HEK293 (cell line): ENCODE measurements at regions of chr20 and their contacts with region 1.

Region 1: GRCh38 chr20:38434743-38435554 is at the start of gene SNHG17:
- H3K4me3 ChIP-seq: peak within 1 kb of the TSS; percentile 71
- H3K27ac ChIP-seq: peak within 1 kb of the TSS; percentile 95
- H3K4me1 ChIP-seq: no peaks in the 10 kb centered on the region
- CTCF ChIP-seq: peak; percentile 100

Region 2: DNA sequence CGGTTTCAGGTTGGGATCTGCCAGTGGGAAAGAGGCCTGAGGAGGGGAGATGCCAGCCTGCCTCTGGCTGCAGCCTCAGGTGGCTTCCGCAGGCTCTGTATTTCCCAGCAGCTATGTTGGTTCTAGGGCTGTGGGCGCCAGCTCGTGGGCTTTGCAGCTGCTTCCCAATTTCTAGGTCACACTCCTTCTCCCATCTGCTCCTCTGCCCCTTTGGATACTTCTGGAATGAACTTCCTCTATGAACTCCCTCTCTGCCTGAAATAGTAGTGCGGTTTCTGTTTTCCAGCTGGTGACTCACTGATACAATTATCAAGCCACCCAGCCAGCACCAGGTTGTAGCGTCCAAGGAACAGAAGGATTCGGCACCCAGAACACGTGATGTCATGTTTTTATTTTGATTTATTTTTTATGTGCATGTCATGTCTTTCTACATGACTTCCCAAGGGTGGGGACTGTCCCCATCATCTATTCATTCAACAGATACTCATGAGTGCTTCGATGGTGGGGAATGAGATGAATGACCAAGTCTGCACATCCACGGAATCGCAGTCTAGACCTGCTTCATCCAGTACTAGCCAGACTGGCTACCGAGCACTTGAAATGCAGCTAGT is 307.8 kb before region 1 on chr20:
- CTCF ChIA-PET with region 1: no interaction called
- POLR2A ChIA-PET with region 1: no interaction called
- H3K4me3 ChIP-seq: no peak overlapping the region
- H3K27ac ChIP-seq: no peak overlapping the region
- H3K4me1 ChIP-seq: no peaks in the 10 kb centered on the region
- CTCF ChIP-seq: no peak

Region 3: DNA sequence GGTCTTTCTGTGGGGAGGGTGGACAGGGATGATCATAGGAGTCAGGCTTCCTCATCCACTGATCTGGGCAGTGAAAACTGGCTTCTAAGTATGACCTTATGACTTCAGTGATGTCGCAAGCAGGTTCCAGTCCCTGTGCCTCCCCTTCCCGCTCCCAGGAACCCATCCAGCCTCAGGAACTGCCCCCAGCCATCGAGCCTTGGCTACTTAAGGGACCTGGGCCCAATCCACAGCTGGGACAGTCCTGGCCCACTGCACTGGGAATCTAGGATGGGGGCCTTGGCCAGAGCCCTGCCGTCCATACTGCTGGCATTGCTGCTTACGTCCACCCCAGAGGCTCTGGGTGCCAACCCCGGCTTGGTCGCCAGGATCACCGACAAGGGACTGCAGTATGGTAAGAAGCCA is 88.7 kb before region 1 on chr20 and contains the start of gene LBP:
- CTCF ChIA-PET with region 1: no interaction called
- POLR2A ChIA-PET with region 1: no interaction called
- H3K4me3 ChIP-seq: no peak within 1 kb of the TSS
- H3K27ac ChIP-seq: no peak within 1 kb of the TSS
- H3K4me1 ChIP-seq: no peaks in the 10 kb centered on the region
- CTCF ChIP-seq: no peak

Region 4: GRCh38 chr20:38446441-38447209 is 11.7 kb after region 1 on chr20:
- CTCF ChIA-PET with region 1: interaction called, 64 read pairs
- POLR2A ChIA-PET with region 1: interaction called, 96 read pairs
- H3K4me3 ChIP-seq: peak overlapping the region; percentile 89
- H3K27ac ChIP-seq: peak overlapping the region; percentile 76
- H3K4me1 ChIP-seq: peaks cover 3% of the 10 kb centered on the region
- CTCF ChIP-seq: peak; percentile 99

Region 5: GRCh38 chr20:38453941-38454340 is 19.0 kb after region 1 on chr20:
- CTCF ChIA-PET with region 1: interaction called, 11 read pairs
- POLR2A ChIA-PET with region 1: interaction called, 13 read pairs
- H3K4me3 ChIP-seq: no peak overlapping the region
- H3K27ac ChIP-seq: no peak overlapping the region
- H3K4me1 ChIP-seq: no peaks in the 10 kb centered on the region
- CTCF ChIP-seq: no peak

Region 6: DNA sequence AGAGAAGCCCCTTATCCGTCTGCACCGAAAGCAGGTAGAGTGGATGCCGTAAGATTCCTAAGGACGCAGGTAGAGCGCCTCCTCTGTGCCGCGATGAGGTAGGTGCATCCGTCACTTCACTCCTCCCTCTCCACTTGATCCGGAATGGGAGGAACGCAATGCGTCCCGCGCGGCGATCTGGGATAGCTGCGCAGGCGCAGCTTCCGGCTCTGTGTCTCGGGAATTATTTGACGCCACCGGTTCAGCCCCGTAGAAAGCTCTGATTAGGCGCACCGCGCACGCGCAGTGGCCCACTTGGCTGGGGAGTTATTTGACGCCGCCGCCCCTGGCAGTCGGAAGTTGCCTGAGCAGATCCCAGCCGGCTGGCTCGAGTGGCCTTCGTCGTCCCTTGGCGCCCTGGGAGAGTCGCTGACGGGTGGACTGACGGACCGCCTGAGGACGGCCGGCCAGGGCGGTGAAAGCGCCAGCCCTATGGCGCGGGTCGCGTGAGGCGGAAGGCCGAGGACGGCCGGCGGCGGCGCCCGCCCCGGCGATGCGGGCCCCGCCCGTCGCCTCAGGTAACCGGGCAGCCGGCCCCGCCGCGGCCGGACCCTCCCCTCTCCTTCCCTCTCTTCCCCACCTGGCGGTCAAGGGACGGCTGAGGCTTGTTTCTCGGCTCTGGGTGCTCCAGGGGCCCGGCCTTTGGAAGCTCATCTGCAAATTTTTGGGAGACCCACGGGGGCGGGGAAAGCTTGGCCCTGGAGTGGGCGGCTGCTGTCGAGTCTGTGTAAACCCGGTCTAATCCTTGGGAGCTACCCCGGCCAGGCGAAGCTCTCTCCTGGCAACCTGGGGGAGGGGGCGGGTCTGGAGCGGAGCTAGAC is 37.8 kb after region 1 on chr20 and contains the start of gene RALGAPB:
- CTCF ChIA-PET with region 1: interaction called, 43 read pairs
- POLR2A ChIA-PET with region 1: interaction called, 84 read pairs
- H3K4me3 ChIP-seq: peak within 1 kb of the TSS; percentile 80
- H3K27ac ChIP-seq: peak within 1 kb of the TSS; percentile 75
- H3K4me1 ChIP-seq: peaks cover 3% of the 10 kb centered on the region; the same call in 1 of the 2 replicates
- CTCF ChIP-seq: peak; percentile 97